ENCODE measurements at regions of chr7 and their contacts with region 1.

Region 1: GRCh38 chr7:75738987-75739795 is 450 bp upstream of the HIP1 start:
- DNase-seq: peak; percentile 100
- H3K4me3 ChIP-seq: peak overlapping the region; percentile 88 to 100 (median 94)
- H3K27ac ChIP-seq: peak overlapping the region; percentile 88 to 96 (median 92)
- H3K4me1 ChIP-seq: peaks cover 15 to 58% (median 42%) of the 10 kb centered on the region in 6 donors
- H3K27me3 ChIP-seq: no peaks in the 10 kb centered on the region
- CTCF ChIP-seq: peak in 8 of 11 experiments; percentile 33 to 66 (median 53)
- POLR2A ChIP-seq: no peak

Region 2: DNA sequence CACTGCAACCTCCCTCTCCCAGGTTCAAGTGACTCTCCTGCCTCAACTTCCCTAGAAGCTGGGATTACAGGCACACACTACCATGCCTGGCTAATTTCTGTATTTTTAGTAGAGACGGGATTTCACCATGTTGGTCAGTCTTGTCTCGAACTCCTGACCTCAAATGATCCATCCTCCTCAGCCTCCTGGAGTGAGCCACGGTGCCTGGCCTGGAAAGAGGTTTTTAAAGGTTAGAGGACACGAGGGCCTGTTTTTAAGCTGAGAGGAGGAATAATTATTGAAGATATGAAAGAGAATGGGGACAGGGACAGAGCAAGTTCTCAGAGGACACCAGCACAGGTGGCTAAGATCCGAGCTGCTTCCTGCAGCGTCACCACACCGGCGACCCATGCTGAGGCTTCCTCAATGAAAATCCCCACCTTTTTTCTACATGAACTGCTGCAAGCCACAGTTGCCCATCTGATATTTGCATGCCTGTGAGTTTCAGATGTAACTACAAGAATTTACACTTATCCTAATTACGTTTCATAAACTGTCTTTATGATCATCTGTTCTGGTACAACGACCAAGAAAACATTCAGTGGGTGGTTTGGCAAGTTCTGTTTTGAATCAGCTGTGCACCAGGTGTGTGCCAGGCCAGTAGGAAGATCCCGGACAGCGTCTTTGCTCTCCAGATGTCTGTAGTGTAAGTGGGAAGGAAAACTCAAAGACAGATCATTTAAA is 76.5 kb before region 1 on chr7:
- intact Hi-C with region 1: loop called (anchors 10 kb)
- DNase-seq: peak; percentile 83
- H3K4me3 ChIP-seq: peak overlapping the region in 2 of 8 donors; percentile 5 to 21
- H3K27ac ChIP-seq: peak overlapping the region in 5 of 8 donors; percentile 26 to 75 (median 65)
- H3K4me1 ChIP-seq: peaks cover 0 to 38% (median 9%) of the 10 kb centered on the region in 6 donors
- H3K27me3 ChIP-seq: no peaks in the 10 kb centered on the region
- CTCF ChIP-seq: no peak
- POLR2A ChIP-seq: no peak